ENCODE measurements at regions of chr4 and their contacts with region 1.

Region 1: GRCh38 chr4:20684852-20685763 is 15.2 kb upstream of the PACRGL start:
- DNase-seq: no peak
- H3K4me3 Mint-ChIP-seq: no peak overlapping the region
- H3K27ac Mint-ChIP-seq: no peak overlapping the region
- H3K4me1 Mint-ChIP-seq: no peaks in the 10 kb centered on the region
- H3K27me3 Mint-ChIP-seq: peaks cover 18% of the 10 kb centered on the region

Region 2: DNA sequence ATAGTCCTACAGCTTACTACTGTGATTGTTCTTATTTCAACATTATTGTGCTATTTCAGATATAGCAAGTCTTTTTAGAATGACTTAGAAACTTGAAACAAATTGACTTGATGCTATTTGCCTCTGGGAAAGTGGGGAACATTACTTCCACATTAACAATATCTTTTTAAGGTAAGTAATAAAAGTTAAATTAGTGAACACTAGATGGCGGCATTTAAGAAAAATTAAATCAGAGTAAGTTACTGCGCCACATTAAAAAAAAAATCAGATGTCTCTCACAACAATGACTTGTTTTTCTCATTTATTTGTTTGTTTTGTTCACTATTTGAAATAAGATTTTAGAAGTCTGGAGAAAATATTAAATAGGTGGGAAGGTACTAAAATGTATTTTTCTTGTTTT is 1460.3 kb before region 1 on chr4:
- CTCF ChIA-PET with region 1: no interaction called
- intact Hi-C with region 1: loop called (anchors 5 kb)
- DNase-seq: no peak
- H3K4me3 Mint-ChIP-seq: no peak overlapping the region
- H3K27ac Mint-ChIP-seq: no peak overlapping the region
- H3K4me1 Mint-ChIP-seq: no peaks in the 10 kb centered on the region
- H3K27me3 Mint-ChIP-seq: no peaks in the 10 kb centered on the region

Region 3: GRCh38 chr4:20395160-20395773 is 289.8 kb before region 1 on chr4:
- CTCF ChIA-PET with region 1: interaction called, 11 read pairs
- intact Hi-C with region 1: loop called (anchors 1 kb)
- DNase-seq: peak; percentile 46
- H3K4me3 Mint-ChIP-seq: no peak overlapping the region
- H3K27ac Mint-ChIP-seq: no peak overlapping the region
- H3K4me1 Mint-ChIP-seq: no peaks in the 10 kb centered on the region
- H3K27me3 Mint-ChIP-seq: peaks cover 7% of the 10 kb centered on the region

Region 4: GRCh38 chr4:20544645-20545044 is 140.5 kb before region 1 on chr4:
- CTCF ChIA-PET with region 1: interaction called, 3 read pairs
- intact Hi-C with region 1: loop called (anchors 10 kb)
- DNase-seq: no peak
- H3K4me3 Mint-ChIP-seq: no peak overlapping the region
- H3K27ac Mint-ChIP-seq: no peak overlapping the region
- H3K4me1 Mint-ChIP-seq: no peaks in the 10 kb centered on the region
- H3K27me3 Mint-ChIP-seq: no peaks in the 10 kb centered on the region

Region 5: DNA sequence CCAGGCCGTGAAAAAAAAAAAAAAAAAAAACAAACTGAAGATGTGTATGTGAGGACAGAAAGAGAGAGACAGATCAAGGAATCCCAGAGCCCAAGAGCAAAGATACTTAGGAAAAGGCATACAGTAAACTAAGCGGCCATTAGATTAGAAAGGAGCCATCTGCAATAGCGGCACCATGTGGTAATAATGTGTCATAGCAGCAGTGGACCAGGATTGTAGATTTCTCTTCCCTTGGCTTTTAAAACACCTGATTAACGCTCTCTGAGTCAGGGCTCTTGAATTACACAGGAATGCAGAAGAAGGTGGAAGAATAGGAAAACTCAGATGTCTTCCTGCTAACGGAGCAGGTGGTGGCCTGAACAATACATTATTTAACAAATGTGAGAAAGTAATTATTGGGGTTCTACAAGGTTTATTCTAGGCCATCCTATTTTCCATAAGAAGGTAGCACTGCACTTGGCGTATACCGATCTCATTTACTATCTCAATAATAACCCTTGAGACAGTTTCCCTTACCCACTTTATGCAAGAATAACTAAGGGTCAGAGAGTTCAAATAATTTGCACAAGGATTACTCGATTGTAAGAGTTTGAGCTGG is 1080.8 kb after region 1 on chr4:
- CTCF ChIA-PET with region 1: no interaction called
- intact Hi-C with region 1: loop called (anchors 5 kb)
- DNase-seq: peak; percentile 56
- H3K4me3 Mint-ChIP-seq: no peak overlapping the region
- H3K27ac Mint-ChIP-seq: peak overlapping the region; percentile 59
- H3K4me1 Mint-ChIP-seq: peaks cover 4% of the 10 kb centered on the region
- H3K27me3 Mint-ChIP-seq: peaks cover 7% of the 10 kb centered on the region